ENCODE measurements at regions of chr1 and their contacts with region 1.

Region 1: GRCh38 chr1:109532365-109533136 is 7.1 kb upstream of the GPR61 start:
- DNase-seq: peak; percentile 89
- CTCF ChIP-seq: peak; percentile 94

Region 2: DNA sequence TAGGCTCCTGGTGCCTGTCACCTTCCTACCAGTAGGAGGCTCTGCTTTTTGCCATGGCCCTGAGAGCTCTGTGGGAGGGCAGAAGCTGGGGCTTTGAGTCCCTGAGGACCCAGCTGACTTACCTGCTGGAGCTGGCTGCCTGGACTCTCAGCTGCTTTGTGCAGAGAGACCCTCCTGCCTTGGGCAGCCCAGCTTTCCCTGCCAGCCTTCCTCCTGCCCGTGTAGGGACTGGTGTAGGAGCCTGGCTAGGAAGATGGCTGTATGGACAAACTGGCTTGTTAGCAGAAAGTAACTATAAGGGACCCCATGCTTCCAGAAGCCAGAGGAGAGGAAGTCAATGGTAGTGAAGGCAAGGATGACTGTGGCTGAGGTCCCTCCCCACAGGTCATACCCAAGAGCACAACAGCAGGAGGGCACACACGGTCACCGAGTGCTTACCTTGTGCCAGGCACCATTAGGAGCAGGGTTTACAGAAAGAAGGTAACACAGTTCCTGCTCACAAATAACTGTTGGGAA is 292.9 kb before region 1 on chr1:
- CTCF ChIA-PET with region 1: interaction called, 15 read pairs
- POLR2A ChIA-PET with region 1: no interaction called
- DNase-seq: peak; percentile 65
- CTCF ChIP-seq: peak; percentile 39

Region 3: GRCh38 chr1:109282952-109283747 is 249.4 kb before region 1 on chr1 and contains the start of gene PSRC1:
- CTCF ChIA-PET with region 1: interaction called, 102 read pairs
- POLR2A ChIA-PET with region 1: no interaction called
- DNase-seq: peak; percentile 97
- CTCF ChIP-seq: peak; percentile 63

Region 4: GRCh38 chr1:109426278-109427170 is 106.0 kb before region 1 on chr1 and contains the start of gene PSMA5:
- CTCF ChIA-PET with region 1: interaction called, 68 read pairs
- POLR2A ChIA-PET with region 1: no interaction called
- DNase-seq: peak; percentile 95
- CTCF ChIP-seq: no peak

Region 5: DNA sequence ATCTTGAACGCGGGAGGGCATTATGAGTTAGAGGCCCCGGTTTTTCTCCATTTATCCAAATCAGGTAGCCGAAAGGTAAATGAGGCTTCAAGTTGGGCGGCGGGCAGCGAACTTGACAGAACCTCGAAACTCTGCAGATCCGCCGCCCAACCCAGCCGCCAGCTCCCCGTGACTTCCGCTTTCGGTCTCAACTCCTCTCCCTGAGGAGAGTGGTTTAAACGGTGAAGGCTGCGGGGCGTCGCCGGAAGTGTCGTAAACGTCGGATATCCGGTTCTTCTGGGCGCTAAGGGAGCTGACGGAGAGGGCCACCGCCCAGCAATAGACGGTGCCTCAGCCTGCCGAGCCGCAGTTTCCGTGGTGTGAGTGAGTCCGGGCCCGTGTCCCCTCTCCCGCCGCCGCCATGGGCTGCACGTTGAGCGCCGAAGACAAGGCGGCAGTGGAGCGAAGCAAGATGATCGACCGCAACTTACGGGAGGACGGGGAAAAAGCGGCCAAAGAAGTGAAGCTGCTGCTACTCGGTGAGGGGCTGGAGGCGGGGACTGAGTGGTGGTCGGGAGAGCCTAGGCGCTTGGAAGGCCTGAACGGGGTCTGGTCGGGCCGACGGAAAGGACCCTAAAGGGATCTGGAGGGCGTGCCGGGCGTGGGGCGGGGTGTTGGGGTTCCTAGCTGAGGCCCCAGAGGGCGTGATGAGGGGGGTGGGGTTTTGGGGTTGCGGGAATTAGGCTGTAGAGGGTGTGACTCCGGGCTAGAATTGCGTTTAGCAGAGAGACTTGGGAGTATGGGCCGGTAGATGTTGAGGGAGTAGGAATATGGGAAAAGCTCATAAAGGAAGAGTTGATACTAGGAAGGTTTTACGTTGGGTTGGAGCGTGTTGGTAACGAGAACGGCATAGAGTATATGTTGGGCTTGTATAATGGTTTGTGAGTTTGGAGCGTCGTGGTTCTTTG is 16.0 kb after region 1 on chr1 and contains the start of gene GNAI3:
- CTCF ChIA-PET with region 1: interaction called, 205 read pairs
- POLR2A ChIA-PET with region 1: no interaction called
- DNase-seq: peak; percentile 95
- CTCF ChIP-seq: no peak

Region 6: GRCh38 chr1:109630081-109630897 is 97.7 kb after region 1 on chr1:
- CTCF ChIA-PET with region 1: interaction called, 13 read pairs
- POLR2A ChIA-PET with region 1: no interaction called
- DNase-seq: peak; percentile 59
- CTCF ChIP-seq: peak; percentile 29

Region 7: DNA sequence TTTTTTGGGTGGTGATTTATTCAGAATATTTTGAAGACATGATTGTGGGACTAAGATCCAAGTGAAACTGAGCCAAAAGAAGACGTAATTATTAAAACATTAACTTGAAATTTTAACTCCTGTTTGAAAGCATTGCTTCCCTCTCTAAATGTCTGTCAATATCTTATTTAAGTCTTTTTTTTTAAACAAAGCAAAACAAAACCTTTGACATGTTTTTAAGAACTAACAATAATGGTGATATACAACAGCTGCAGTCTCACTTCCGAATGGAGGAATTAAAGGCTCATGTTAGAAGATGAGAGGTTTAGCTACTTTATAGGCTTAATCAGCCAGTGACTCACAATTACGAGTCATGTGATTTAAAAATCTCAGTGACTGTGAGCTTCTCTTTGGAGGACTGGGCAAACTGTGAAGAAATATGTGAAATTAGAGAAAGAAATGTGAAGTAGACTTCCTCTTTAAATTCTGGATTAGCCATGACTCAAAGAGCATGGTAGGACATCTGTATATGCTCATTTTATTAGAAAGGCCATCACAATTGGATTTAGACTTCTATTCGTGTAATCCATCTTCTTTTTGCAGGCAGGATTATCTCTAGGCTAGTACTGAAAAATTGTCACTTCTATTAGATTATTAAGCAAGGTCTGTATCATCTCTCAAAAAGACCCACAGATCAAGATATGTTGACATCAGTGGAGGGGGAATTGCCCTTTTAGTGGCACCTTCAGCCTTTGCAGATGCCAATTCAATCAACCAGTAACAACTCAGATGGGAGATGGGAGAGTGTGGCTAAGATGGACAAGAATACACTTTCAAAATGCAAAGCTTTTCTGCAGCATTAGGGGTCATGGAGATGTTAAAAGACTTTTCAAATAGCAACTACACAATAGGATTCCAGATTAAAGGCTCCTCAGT is 1113.5 kb after region 1 on chr1:
- CTCF ChIA-PET with region 1: no interaction called
- POLR2A ChIA-PET with region 1: no interaction called
- DNase-seq: no peak
- CTCF ChIP-seq: no peak

Measured in GM10248 (cell line).